ENCODE measurements at regions of chr12 and their contacts with region 1.

Region 1: DNA sequence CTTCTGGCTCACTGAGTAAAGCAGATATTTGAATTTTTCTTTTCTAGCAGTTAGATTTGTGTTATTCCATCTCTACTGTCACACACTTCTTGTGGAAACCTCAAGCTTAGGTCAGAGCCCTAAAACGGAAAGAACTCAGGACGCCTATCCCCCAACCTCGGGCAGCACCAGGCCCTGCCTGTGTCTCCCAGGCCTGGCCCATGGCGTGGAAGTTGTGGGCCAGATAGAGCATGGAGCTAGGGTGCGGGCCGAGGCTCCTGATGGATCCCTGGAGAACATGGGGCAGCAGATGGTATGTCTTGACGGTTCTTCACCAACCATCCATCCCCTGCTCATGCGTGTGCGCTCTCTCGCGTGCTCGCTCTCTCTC is 20.6 kb downstream of the P2RX4 start:
- DNase-seq: no peak
- CTCF ChIP-seq: peak; percentile 12

Region 2: DNA sequence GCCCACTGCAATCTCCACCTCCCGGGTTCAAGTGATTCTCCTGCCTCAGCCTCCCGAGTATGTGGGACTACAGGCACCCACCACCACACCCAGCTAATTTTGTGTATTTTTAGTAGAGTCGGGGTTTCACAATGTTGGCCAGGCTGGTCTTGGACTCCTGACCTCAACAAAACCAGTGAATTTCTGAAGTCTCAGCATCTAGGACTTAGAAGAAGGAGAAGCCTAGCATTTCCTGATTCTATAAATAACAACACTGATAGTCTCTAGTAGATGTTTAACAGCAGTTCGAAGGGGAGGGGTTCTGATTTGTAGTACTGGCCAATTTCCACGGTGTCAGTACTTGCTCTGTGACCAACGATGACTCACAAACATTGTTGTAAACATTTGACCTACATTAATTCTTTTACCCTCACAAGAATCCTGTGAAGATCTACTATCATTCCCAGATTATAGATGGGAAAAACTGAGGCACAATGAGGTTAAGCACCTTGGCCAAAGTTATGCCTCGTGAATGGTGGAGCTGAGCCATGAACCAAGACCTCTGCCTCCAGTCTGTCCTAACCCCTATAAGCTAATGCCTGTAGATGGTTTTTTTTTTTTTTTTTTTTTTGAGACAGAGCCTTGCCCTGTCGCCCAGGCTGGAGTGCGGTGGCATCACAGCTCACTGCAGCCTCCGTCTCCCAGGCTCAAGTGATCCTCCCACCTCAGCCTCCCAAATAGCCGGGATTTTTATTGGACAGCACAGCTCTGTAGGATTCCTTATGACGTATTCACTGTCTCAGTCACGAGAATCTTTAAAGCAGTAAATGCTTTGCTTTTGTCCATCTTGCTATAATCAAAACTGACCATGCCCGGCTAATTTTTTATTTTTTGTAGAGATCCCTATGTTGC is 15.4 kb before region 1 on chr12:
- CTCF ChIA-PET with region 1: interaction called, 12 read pairs
- POLR2A ChIA-PET with region 1: no interaction called
- DNase-seq: no peak
- CTCF ChIP-seq: no peak

Region 3: GRCh38 chr12:121240484-121241101 is 10.1 kb after region 1 on chr12:
- CTCF ChIA-PET with region 1: interaction called, 40 read pairs
- POLR2A ChIA-PET with region 1: no interaction called
- DNase-seq: peak; percentile 61
- CTCF ChIP-seq: no peak